Activated CD4-positive, alpha-beta T cell treated with anti-CD3 and anti-CD28 coated beads, Interleukin-2, amount 10 ng/mL, durations not matched to agents 24 days and 14 days (primary cell): ENCODE measurements at regions of chr19 and their contacts with region 1.

Region 1: DNA sequence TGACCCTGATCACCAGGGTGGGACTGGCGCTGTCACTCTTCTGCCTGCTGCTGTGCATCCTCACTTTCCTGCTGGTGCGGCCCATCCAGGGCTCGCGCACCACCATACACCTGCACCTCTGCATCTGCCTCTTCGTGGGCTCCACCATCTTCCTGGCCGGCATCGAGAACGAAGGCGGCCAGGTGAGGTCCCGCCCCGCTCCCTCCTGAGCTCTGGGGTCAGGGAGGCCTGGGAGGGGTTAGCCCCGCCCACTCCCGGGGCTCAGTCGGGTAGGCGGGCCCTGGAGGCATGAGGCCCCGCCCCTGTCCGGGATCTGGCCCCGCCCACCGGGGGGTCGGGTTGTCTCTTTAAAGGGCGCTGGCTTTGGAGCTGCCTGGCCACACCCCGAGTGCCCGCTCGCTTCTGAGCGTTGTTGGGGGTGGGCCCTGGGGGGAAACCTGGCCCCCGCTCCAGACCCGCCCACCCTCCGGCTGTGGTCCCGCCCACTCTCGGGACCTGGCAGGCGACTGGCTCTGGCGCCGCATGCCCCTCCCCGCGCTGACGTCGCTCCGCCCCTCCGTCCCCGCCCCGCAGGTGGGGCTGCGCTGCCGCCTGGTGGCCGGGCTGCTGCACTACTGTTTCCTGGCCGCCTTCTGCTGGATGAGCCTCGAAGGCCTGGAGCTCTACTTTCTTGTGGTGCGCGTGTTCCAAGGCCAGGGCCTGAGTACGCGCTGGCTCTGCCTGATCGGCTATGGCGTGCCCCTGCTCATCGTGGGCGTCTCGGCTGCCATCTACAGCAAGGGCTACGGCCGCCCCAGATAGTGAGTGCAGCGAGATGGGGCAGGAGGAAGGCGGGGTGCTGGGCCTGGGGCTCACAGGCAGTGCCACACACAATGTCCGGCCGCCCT is 13.1 kb downstream of the DDX39A start:
- DNase-seq: peak; percentile 97
- H3K4me3 Mint-ChIP-seq: no peak overlapping the region
- H3K27ac Mint-ChIP-seq: peak overlapping the region; percentile 76
- H3K4me1 Mint-ChIP-seq: peaks cover 2% of the 10 kb centered on the region
- H3K27me3 Mint-ChIP-seq: no peaks in the 10 kb centered on the region

Region 2: DNA sequence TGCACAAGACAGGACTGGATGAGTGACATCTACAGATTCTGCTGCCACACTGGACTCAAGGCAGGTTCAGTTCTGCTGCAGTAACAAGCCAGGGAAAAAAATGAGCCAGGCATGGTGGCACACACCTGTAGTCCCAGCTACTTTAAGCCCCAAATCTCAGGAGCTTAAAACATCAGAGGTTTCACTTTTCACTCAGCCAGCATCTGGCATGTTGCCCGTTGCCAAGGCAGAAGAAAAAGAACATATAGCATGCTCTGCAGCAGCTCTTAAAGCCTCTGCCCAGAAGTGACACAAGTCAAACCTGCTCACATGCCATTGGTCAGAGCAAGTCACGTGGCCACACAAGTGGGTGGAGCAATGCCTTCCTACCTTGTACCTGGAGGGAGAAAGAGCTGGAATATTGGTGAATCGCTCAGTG is 39.5 kb before region 1 on chr19:
- intact Hi-C with region 1: loop called (anchors 1 kb)
- DNase-seq: peak; percentile 97
- H3K4me3 Mint-ChIP-seq: peak overlapping the region; percentile 72
- H3K27ac Mint-ChIP-seq: peak overlapping the region; percentile 96
- H3K4me1 Mint-ChIP-seq: peaks cover 59% of the 10 kb centered on the region
- H3K27me3 Mint-ChIP-seq: no peaks in the 10 kb centered on the region